ENCODE measurements at regions of chr4 and their contacts with region 1.

Region 1: DNA sequence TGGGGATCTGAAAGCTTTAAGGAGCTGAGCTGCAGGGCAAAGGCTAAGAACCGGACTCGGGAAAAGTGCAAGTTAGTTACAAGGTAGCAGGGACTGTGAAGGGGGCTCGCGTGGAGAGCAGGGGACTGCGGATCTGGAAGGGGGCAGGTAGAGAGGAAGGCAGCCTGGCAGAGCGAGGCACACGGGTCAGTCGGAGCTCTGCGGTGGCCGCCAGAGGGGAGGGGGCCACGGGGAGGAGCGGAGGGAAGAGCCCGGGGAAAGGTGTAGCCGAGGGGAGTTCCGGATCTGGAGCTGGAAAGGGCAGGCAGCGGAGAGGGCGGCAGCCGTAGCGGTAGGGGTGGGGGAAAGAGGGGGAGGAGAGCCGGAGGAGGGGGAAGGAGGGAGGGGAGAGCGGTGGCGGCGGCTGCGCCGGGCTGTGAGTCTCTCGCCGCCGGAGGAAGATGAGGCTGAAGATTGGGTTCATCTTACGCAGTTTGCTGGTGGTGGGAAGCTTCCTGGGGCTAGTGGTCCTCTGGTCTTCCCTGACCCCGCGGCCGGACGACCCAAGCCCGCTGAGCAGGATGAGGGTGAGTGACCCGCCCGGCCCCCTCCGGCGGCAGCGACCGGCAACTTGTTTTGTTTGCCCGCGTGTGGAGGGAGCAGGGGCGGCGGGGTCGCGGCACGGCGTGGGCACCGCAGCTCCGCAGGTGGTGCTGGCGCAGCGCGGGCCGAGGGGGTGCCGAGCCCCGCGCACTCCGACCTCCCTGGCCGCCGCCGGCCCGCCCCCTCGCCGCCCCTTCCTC is at the start of gene GALNT7:
- DNase-seq: peak in 8 of 9 experiments; percentile 43 to 81 (median 66)
- ATAC-seq: peak; percentile 61
- H3K4me3 ChIP-seq: peak within 1 kb of the TSS; percentile 65 to 89
- H3K4me3 Mint-ChIP-seq: peak within 1 kb of the TSS; percentile 96
- H3K27ac ChIP-seq: peak within 1 kb of the TSS; percentile 42 to 68
- H3K27ac Mint-ChIP-seq: peak within 1 kb of the TSS; percentile 94
- H3K4me1 ChIP-seq: peaks cover 18% of the 10 kb centered on the region
- H3K4me1 Mint-ChIP-seq: peaks cover 48% of the 10 kb centered on the region
- H3K27me3 ChIP-seq: no peaks in the 10 kb centered on the region
- H3K27me3 Mint-ChIP-seq: no peaks in the 10 kb centered on the region
- CTCF ChIP-seq: no peak
- total RNA-seq, gene GALNT7: 4.4 to 7.3 TPM

Region 2: DNA sequence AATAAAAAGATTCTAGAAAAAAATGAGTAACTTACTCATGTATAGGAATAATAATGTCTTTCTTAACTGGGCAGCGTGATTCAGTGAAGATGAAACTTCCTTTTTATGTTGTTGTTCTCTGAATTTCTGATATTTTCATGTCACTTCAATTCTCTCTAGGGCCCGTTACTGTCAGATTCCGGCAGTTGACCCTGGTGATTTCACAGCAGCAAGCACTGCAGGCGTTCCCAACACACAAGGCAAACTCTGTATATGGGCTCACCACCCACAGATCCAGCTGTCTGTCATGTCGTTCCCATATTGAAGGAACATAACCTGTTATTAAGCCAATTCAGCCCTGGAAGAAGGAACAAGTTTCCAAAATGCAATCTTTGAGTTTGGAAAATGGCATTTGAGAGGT is 1643.7 kb before region 1 on chr4:
- CTCF ChIA-PET with region 1: no interaction called
- POLR2A ChIA-PET with region 1: no interaction called
- intact Hi-C with region 1: no loop called
- DNase-seq: no peak
- ATAC-seq: no peak
- H3K4me3 ChIP-seq: no peak overlapping the region
- H3K4me3 Mint-ChIP-seq: no peak overlapping the region
- H3K27ac ChIP-seq: no peak overlapping the region
- H3K27ac Mint-ChIP-seq: no peak overlapping the region
- H3K4me1 ChIP-seq: no peaks in the 10 kb centered on the region
- H3K4me1 Mint-ChIP-seq: no peaks in the 10 kb centered on the region
- H3K27me3 ChIP-seq: no peaks in the 10 kb centered on the region
- H3K27me3 Mint-ChIP-seq: no peaks in the 10 kb centered on the region
- CTCF ChIP-seq: no peak

Region 3: DNA sequence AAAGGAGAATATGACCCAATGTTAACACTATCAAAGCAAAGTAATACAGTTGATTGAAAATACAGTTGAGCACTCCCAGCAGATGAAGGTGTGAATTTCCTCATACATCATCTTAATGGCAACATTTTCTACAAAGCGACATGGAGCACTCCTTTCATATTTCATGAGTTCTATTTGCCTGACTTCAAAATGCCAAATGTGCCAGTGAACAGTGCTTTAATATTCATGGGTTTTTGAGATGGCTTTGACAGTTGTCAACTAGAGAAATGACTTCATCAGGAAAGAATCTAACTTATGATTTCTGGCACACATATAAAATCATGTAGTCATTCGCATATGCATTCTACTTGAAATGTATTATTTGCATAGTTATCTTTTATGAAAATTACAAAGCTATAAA is 1133.0 kb before region 1 on chr4:
- CTCF ChIA-PET with region 1: no interaction called
- POLR2A ChIA-PET with region 1: no interaction called
- intact Hi-C with region 1: no loop called
- DNase-seq: no peak
- ATAC-seq: no peak
- H3K4me3 ChIP-seq: no peak overlapping the region
- H3K4me3 Mint-ChIP-seq: no peak overlapping the region
- H3K27ac ChIP-seq: no peak overlapping the region
- H3K27ac Mint-ChIP-seq: no peak overlapping the region
- H3K4me1 ChIP-seq: no peaks in the 10 kb centered on the region
- H3K4me1 Mint-ChIP-seq: no peaks in the 10 kb centered on the region
- H3K27me3 ChIP-seq: no peaks in the 10 kb centered on the region
- H3K27me3 Mint-ChIP-seq: no peaks in the 10 kb centered on the region
- CTCF ChIP-seq: no peak

Region 4: DNA sequence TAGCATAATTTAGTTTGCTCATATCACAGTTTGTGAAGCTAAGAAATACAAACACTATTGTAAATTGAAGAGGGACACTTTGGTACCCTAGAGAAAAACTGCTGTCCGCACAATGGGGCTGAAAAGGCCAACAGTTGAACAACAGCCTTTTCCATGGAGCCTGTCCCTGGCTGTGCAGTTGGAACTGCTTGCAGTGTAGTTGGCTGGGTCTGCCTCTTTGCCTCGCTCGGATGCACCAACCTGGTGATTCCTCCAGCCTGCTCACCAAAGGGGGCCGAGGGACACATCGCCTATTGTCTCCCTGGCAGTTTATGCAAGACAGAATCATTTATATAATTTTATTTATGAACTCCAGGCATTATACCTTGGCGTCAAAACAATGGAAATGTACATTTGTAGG is 16.5 kb before region 1 on chr4:
- CTCF ChIA-PET with region 1: no interaction called
- POLR2A ChIA-PET with region 1: no interaction called
- intact Hi-C with region 1: no loop called
- DNase-seq: no peak
- ATAC-seq: no peak
- H3K4me3 ChIP-seq: no peak overlapping the region
- H3K4me3 Mint-ChIP-seq: no peak overlapping the region
- H3K27ac ChIP-seq: no peak overlapping the region
- H3K27ac Mint-ChIP-seq: no peak overlapping the region
- H3K4me1 ChIP-seq: no peaks in the 10 kb centered on the region
- H3K4me1 Mint-ChIP-seq: no peaks in the 10 kb centered on the region
- H3K27me3 ChIP-seq: no peaks in the 10 kb centered on the region
- H3K27me3 Mint-ChIP-seq: no peaks in the 10 kb centered on the region
- CTCF ChIP-seq: no peak

Region 5: DNA sequence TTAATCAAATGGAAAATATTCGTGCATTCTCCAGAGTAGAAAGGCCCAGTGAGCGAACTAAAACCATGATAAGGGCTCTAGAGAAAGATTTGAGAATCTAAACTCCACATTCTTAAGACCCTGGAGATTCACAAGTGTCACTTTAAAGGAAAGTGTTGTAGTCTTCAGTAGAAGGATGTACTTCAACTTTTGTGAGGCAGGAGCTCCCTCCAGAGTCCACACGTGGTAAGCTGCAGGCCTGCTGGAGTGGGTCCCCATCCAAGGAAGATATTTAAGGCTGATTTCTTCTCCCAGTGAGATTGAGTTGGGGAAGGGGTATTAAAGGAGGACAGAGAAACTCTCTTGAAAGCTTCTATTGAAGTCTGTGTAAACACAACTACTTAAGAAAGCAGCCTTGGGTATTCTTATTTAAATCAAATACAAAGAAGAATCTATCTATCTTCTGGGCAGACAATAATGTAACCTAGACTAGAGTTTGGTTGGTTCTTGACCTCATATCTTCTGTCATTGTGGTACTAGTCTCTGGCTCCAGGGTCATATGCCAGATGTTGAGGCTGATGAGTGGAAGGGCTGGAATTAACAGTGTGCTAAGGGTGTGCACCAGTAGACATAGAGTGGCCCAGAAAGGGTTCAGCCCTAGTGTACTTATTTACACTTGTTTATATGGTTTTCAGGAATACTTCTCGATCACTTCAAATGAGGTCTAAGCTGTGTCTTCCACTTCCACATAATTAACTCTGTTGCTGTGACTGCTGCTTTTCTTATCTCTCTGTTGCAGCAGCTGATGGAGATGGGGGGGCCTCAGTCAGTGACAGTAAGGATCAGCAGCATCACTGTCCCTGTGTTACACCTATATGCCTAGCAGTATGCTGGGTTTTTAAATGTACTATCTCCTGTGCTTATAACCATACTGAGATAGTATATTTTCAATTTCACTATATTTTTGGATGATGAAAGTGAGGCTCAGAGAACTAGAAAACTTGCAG is 89.4 kb after region 1 on chr4:
- CTCF ChIA-PET with region 1: no interaction called
- POLR2A ChIA-PET with region 1: no interaction called
- intact Hi-C with region 1: loop called in 1 of 2 experiments (anchors 10 kb)
- DNase-seq: peak; percentile 10 to 71 (median 56)
- ATAC-seq: peak; percentile 77
- H3K4me3 ChIP-seq: no peak overlapping the region
- H3K4me3 Mint-ChIP-seq: no peak overlapping the region
- H3K27ac ChIP-seq: no peak overlapping the region
- H3K27ac Mint-ChIP-seq: no peak overlapping the region
- H3K4me1 ChIP-seq: no peaks in the 10 kb centered on the region
- H3K4me1 Mint-ChIP-seq: peaks cover 4% of the 10 kb centered on the region
- H3K27me3 ChIP-seq: no peaks in the 10 kb centered on the region
- H3K27me3 Mint-ChIP-seq: no peaks in the 10 kb centered on the region
- CTCF ChIP-seq: peak; percentile 77

Region 6: GRCh38 chr4:173293663-173294062 is 125.1 kb after region 1 on chr4:
- CTCF ChIA-PET with region 1: no interaction called
- POLR2A ChIA-PET with region 1: no interaction called
- intact Hi-C with region 1: loop called in 1 of 2 experiments (anchors 5 kb)
- DNase-seq: no peak
- ATAC-seq: no peak
- H3K4me3 ChIP-seq: no peak overlapping the region
- H3K4me3 Mint-ChIP-seq: no peak overlapping the region
- H3K27ac ChIP-seq: no peak overlapping the region
- H3K27ac Mint-ChIP-seq: no peak overlapping the region
- H3K4me1 ChIP-seq: no peaks in the 10 kb centered on the region
- H3K4me1 Mint-ChIP-seq: peaks cover 8% of the 10 kb centered on the region
- H3K27me3 ChIP-seq: no peaks in the 10 kb centered on the region
- H3K27me3 Mint-ChIP-seq: no peaks in the 10 kb centered on the region
- CTCF ChIP-seq: no peak

Region 7: GRCh38 chr4:173370477-173371291 is 202.1 kb after region 1 on chr4 and contains the start of gene SAP30:
- CTCF ChIA-PET with region 1: no interaction called
- POLR2A ChIA-PET with region 1: interaction called, 5 read pairs
- intact Hi-C with region 1: loop called (anchors 1 to 2 kb)
- DNase-seq: peak; percentile 95 to 98 (median 98)
- ATAC-seq: peak; percentile 85
- H3K4me3 ChIP-seq: peak within 1 kb of the TSS; percentile 77 to 93
- H3K4me3 Mint-ChIP-seq: peak within 1 kb of the TSS; percentile 98
- H3K27ac ChIP-seq: peak within 1 kb of the TSS; percentile 78 to 85
- H3K27ac Mint-ChIP-seq: peak within 1 kb of the TSS; percentile 96
- H3K4me1 ChIP-seq: peaks cover 15% of the 10 kb centered on the region
- H3K4me1 Mint-ChIP-seq: peaks cover 34% of the 10 kb centered on the region
- H3K27me3 ChIP-seq: peaks cover 4 to 5% of the 10 kb centered on the region in 2 experiments
- H3K27me3 Mint-ChIP-seq: peaks cover 13% of the 10 kb centered on the region
- CTCF ChIP-seq: no peak
- total RNA-seq, gene SAP30: 3.6 to 3.7 TPM

Region 8: DNA sequence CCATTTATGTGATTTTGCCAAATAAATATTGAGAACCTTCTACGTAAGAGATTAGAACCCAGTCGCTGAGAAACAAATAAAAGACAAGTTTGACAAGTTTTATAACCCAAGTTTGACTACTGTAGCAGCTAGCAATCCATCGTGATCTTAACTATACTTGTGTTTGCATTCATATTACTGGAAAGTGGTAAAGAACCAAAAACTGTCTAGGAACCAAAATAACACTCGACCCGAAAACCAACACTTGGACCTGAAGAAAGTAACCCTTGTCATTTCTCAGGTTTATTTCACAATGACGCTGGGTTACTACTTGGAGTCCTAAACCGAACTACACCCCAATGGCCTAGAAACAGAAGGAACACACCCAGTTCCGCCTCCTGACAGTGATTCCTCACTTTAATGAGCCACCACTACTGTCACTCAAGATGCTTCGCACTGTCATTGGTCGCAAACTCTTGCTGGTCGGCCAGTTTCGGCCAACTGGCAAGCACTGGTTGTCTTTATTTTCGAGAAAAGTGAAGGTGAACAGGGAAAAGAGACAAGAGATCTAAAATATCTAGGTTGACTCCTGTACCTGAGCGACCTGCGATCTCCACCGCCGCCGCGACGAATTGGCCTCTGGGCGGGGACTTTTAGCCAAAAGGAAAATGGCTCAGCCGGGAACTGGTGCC is 1114.4 kb after region 1 on chr4:
- CTCF ChIA-PET with region 1: no interaction called
- POLR2A ChIA-PET with region 1: no interaction called
- intact Hi-C with region 1: loop called in 1 of 2 experiments (anchors 10 kb)
- DNase-seq: peak; percentile 61 to 94 (median 80)
- ATAC-seq: peak; percentile 93
- H3K4me3 ChIP-seq: peak overlapping the region; percentile 88 to 99
- H3K4me3 Mint-ChIP-seq: peak overlapping the region; percentile 100
- H3K27ac ChIP-seq: peak overlapping the region; percentile 98 to 100
- H3K27ac Mint-ChIP-seq: peak overlapping the region; percentile 100
- H3K4me1 ChIP-seq: peaks cover 14% of the 10 kb centered on the region
- H3K4me1 Mint-ChIP-seq: peaks cover 76% of the 10 kb centered on the region
- H3K27me3 ChIP-seq: no peaks in the 10 kb centered on the region
- H3K27me3 Mint-ChIP-seq: no peaks in the 10 kb centered on the region
- CTCF ChIP-seq: no peak